ENCODE measurements at regions of chr11 and their contacts with region 1.

Region 1: GRCh38 chr11:117843666-117844484 is 19.3 kb upstream of the FXYD2 start:
- DNase-seq: peak; percentile 63
- H3K4me3 Mint-ChIP-seq: no peak overlapping the region
- H3K27ac Mint-ChIP-seq: no peak overlapping the region
- H3K4me1 Mint-ChIP-seq: no peaks in the 10 kb centered on the region
- H3K27me3 Mint-ChIP-seq: peaks cover 2% of the 10 kb centered on the region
- CTCF ChIP-seq: peak; percentile 97

Region 2: GRCh38 chr11:117634756-117635603 is 208.9 kb before region 1 on chr11:
- CTCF ChIA-PET with region 1: no interaction called
- POLR2A ChIA-PET with region 1: no interaction called
- intact Hi-C with region 1: no loop called
- DNase-seq: no peak
- H3K4me3 Mint-ChIP-seq: no peak overlapping the region
- H3K27ac Mint-ChIP-seq: no peak overlapping the region
- H3K4me1 Mint-ChIP-seq: peaks cover 8% of the 10 kb centered on the region
- H3K27me3 Mint-ChIP-seq: peaks cover 57% of the 10 kb centered on the region
- CTCF ChIP-seq: no peak

Region 3: GRCh38 chr11:117823294-117823945 is 20.5 kb before region 1 on chr11:
- CTCF ChIA-PET with region 1: interaction called, 12 read pairs
- POLR2A ChIA-PET with region 1: no interaction called
- intact Hi-C with region 1: no loop called
- DNase-seq: no peak
- H3K4me3 Mint-ChIP-seq: no peak overlapping the region
- H3K27ac Mint-ChIP-seq: no peak overlapping the region
- H3K4me1 Mint-ChIP-seq: peaks cover 9% of the 10 kb centered on the region
- H3K27me3 Mint-ChIP-seq: no peaks in the 10 kb centered on the region
- CTCF ChIP-seq: no peak

Region 4: GRCh38 chr11:117833401-117833891 is 10.4 kb before region 1 on chr11:
- CTCF ChIA-PET with region 1: interaction called, 51 read pairs
- POLR2A ChIA-PET with region 1: no interaction called
- intact Hi-C with region 1: no loop called
- DNase-seq: peak; percentile 75
- H3K4me3 Mint-ChIP-seq: no peak overlapping the region
- H3K27ac Mint-ChIP-seq: no peak overlapping the region
- H3K4me1 Mint-ChIP-seq: peaks cover 5% of the 10 kb centered on the region
- H3K27me3 Mint-ChIP-seq: peaks cover 46% of the 10 kb centered on the region
- CTCF ChIP-seq: no peak

Region 5: DNA sequence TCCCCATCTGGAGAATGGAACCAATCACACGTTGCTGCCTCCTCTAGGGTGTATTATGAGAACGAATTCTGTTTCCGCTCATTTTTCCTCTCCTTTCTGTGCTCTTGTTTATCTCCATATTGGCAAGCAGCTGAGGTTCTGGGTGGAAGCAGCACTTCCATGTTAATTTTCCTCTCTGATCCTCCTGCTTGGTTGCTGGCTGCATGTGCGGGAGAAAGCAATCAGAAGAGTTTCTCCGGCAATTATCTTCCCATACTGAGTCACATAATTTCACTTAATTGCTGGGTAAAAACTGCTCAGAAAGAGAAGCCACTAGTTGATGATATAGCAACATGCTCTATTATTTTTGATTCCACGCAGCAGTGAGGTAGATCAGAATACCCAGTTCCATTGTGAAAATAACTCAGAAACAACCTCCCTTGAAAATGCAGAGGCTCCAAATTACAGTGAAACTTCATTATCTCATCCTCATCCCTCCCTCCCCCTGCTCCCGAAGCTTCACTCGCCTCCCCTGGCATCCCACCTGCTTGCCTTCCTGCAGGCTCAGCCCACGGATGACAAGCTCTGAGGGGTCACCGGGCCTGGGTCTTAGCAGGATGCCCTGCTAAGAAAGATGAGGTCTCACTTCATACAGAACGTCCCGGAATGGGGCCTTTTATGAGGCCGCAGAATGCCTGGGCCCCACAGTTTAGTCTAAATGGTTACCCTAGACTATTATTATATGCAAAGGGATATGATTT is 12.2 kb after region 1 on chr11:
- CTCF ChIA-PET with region 1: interaction called, 20 read pairs
- POLR2A ChIA-PET with region 1: no interaction called
- intact Hi-C with region 1: no loop called
- DNase-seq: no peak
- H3K4me3 Mint-ChIP-seq: no peak overlapping the region
- H3K27ac Mint-ChIP-seq: no peak overlapping the region
- H3K4me1 Mint-ChIP-seq: no peaks in the 10 kb centered on the region
- H3K27me3 Mint-ChIP-seq: peaks cover 59% of the 10 kb centered on the region
- CTCF ChIP-seq: no peak